Activated CD8-positive, alpha-beta T cell treated with anti-CD3 and anti-CD28 coated beads for 36 hours (primary cell): ENCODE measurements at regions of chr2 and their contacts with region 1.

Region 1: GRCh38 chr2:70340921-70341765 is 39.3 kb upstream of the FAM136A start:
- DNase-seq: peak; percentile 26
- ATAC-seq: peak; percentile 77
- H3K4me3 Mint-ChIP-seq: no peak overlapping the region
- H3K27ac Mint-ChIP-seq: no peak overlapping the region
- H3K4me1 Mint-ChIP-seq: no peaks in the 10 kb centered on the region
- H3K27me3 Mint-ChIP-seq: peaks cover 2% of the 10 kb centered on the region
- CTCF ChIP-seq: peak; percentile 93

Region 2: DNA sequence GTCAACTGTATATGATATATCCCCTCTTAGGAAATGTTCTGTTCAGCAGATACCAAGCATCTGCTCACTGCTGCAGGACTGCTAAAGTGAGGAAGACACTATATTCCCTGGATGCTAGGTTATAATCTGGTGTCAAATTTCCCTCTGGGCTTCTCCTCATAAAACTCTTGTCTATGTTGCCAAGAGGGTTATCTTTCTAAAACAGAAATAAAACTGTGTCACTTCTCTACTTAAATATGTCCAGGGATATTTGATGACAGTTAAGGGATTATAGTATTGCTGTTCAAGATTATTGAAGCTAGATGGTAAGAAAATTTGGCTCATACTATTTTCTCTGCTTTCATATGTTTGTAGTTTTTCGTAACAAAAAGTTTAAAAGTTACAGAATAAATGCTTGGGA is 477.8 kb before region 1 on chr2:
- CTCF ChIA-PET with region 1: no interaction called
- POLR2A ChIA-PET with region 1: no interaction called
- intact Hi-C with region 1: no loop called
- DNase-seq: no peak
- ATAC-seq: no peak
- H3K4me3 Mint-ChIP-seq: no peak overlapping the region
- H3K27ac Mint-ChIP-seq: no peak overlapping the region
- H3K4me1 Mint-ChIP-seq: no peaks in the 10 kb centered on the region
- H3K27me3 Mint-ChIP-seq: no peaks in the 10 kb centered on the region
- CTCF ChIP-seq: no peak

Region 3: GRCh38 chr2:70321370-70321769 is 19.8 kb before region 1 on chr2:
- CTCF ChIA-PET with region 1: interaction called, 12 read pairs
- POLR2A ChIA-PET with region 1: interaction called, 3 read pairs
- intact Hi-C with region 1: no loop called
- DNase-seq: no peak
- ATAC-seq: no peak
- H3K4me3 Mint-ChIP-seq: no peak overlapping the region
- H3K27ac Mint-ChIP-seq: no peak overlapping the region
- H3K4me1 Mint-ChIP-seq: peaks cover 9% of the 10 kb centered on the region
- H3K27me3 Mint-ChIP-seq: peaks cover 4% of the 10 kb centered on the region
- CTCF ChIP-seq: no peak

Region 4: DNA sequence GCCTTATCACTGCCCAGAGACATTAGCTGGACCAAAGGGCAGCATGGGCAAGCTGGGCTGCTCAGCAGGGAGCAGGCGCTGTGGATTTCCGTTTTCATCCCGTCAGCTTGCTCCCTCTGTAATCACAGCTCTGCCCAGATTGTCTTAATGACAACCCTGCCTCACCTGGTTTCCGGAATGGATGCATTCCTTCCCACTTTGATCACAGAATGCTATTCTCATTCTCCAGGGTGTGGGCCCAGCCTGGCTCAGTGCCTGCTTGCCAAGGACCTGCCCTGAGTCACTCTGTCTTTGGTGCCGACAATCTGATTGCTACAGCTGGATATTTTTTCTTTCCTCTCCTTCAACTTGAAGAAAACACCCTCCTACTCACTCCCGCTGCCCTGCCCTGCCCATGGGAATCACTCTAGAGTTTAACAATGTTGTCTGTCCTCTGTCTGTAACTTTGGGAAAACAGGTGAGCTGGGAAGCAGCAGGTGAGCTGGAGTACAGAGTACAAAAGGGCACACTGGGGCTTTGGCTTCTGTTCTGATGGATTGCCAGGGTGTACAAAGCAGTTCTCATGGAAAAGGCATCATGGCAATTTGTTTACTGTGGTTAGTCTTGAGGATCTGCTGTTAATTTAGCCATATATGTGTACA is 12.1 kb before region 1 on chr2:
- CTCF ChIA-PET with region 1: interaction called, 33 read pairs
- POLR2A ChIA-PET with region 1: no interaction called
- intact Hi-C with region 1: no loop called
- DNase-seq: no peak
- ATAC-seq: no peak
- H3K4me3 Mint-ChIP-seq: no peak overlapping the region
- H3K27ac Mint-ChIP-seq: no peak overlapping the region
- H3K4me1 Mint-ChIP-seq: no peaks in the 10 kb centered on the region
- H3K27me3 Mint-ChIP-seq: no peaks in the 10 kb centered on the region
- CTCF ChIP-seq: no peak

Region 5: DNA sequence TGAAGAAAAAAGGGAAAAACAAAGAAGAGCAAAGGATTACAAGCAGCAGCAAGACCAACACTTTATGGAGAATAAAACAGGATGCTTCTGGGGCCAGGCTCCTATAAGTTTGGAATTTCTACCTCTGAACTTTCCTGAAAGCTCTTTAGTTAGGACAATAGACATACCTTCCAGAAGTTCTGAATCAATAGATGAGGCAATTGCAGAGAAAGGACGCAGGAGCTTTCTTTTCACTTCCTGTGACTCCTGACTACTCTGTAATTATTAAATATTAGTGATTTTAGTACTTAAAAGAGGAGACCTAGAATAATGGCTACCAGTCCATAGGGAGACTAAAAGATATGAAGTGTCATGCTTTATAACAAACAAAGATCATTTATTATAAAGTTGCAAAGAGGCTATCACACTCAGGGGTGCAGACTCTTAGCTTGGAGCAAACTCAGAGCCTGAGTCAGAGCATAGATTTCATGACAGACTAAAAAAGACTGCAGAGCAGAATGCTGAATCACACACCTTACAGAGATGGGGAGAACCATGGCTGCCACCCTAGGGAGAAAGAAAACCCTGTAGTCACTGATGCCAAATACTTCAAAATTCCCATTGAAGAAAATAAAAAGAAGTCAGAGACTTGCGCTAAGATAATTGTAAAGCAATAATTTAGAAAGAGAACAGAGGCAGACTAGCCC is 13.3 kb after region 1 on chr2:
- CTCF ChIA-PET with region 1: interaction called, 12 read pairs
- POLR2A ChIA-PET with region 1: no interaction called
- intact Hi-C with region 1: no loop called
- DNase-seq: no peak
- ATAC-seq: no peak
- H3K4me3 Mint-ChIP-seq: no peak overlapping the region
- H3K27ac Mint-ChIP-seq: no peak overlapping the region
- H3K4me1 Mint-ChIP-seq: no peaks in the 10 kb centered on the region
- H3K27me3 Mint-ChIP-seq: peaks cover 8% of the 10 kb centered on the region
- CTCF ChIP-seq: no peak

Region 6: DNA sequence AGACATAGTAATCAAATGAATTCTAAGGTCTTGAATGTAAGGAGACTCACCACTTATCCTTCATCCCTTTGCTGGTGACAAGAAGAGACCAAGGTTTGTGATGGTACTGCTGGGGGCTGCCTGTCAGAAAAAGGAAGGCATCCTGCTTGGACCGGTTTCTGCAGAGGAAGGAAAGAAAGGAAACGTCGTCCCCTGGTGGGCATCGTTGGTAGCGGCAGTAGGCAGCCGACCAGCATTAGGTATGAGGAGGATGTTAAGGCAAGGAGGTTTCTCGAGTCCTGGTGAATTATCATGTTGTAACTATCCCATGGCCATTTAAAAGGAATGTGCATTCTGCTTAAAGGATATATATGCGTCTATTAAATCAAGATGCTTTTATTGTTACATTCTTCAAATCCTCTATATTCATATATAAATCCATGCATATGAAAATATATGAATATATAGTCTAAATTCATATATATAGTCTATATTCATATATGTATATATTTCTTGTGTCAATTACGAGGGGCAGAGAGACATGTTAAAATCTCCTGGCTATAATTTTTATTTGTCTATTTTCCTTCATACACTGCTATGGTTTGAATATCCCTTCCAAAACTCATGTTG is 306.8 kb after region 1 on chr2:
- CTCF ChIA-PET with region 1: interaction called, 35 read pairs
- POLR2A ChIA-PET with region 1: no interaction called
- intact Hi-C with region 1: loop called (anchors 5 kb)
- DNase-seq: peak; percentile 88
- ATAC-seq: peak; percentile 92
- H3K4me3 Mint-ChIP-seq: no peak overlapping the region
- H3K27ac Mint-ChIP-seq: no peak overlapping the region
- H3K4me1 Mint-ChIP-seq: no peaks in the 10 kb centered on the region
- H3K27me3 Mint-ChIP-seq: peaks cover 6% of the 10 kb centered on the region
- CTCF ChIP-seq: peak; percentile 96